Activated naive CD4-positive, alpha-beta T cell treated with anti-CD3 and anti-CD28 coated beads for 36 hours (primary cell): ENCODE measurements at regions of chr12 and their contacts with region 1.

Region 1: DNA sequence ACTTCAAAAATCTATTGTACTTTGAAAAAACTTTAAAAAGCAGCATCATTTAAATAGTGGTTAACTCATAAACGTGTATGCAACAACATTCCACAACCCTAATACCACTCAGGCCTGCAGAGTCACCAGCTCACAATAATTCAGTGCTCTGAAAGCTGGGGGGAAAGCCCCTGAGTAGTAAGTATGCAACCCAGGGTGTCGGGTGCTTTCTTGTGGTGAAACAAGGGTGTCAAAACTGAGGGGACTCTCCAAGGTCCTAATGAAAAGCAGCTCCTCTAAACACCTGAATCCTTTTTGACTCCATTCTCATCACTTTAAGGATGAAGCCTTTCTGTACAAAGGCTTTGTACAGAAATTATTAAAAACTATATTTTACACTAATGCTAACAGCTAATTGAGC is 33.7 kb downstream of the FGFR1OP2 start:
- DNase-seq: peak; percentile 92
- H3K4me3 Mint-ChIP-seq: no peak overlapping the region
- H3K27ac Mint-ChIP-seq: no peak overlapping the region
- H3K4me1 Mint-ChIP-seq: peaks cover 9% of the 10 kb centered on the region
- H3K27me3 Mint-ChIP-seq: no peaks in the 10 kb centered on the region

Region 2: GRCh38 chr12:26870491-26871419 is 101.2 kb before region 1 on chr12:
- CTCF ChIA-PET with region 1: no interaction called
- intact Hi-C with region 1: loop called (anchors 1 kb)
- DNase-seq: no peak
- H3K4me3 Mint-ChIP-seq: no peak overlapping the region
- H3K27ac Mint-ChIP-seq: no peak overlapping the region
- H3K4me1 Mint-ChIP-seq: peaks cover 13% of the 10 kb centered on the region
- H3K27me3 Mint-ChIP-seq: peaks cover 16% of the 10 kb centered on the region

Region 3: DNA sequence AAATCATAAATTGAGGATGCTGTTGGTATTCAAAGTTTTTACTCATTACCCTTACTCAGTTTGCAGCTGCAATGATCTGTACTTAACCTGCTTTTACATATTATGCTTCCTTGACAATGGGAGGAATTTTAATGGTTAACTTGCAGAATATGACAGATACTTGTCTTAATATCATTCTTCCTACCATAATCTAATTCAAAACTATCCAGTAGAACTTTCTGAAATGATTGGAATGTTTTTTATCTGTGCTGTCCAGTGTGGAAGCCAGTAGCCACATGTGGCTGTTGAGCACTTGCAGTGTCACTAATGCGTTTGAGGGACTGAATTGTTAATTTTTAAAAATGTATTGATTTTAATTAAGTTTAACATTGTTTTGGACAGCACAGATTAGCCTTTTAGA is 10.2 kb before region 1 on chr12:
- CTCF ChIA-PET with region 1: no interaction called
- intact Hi-C with region 1: no loop called
- DNase-seq: no peak
- H3K4me3 Mint-ChIP-seq: no peak overlapping the region
- H3K27ac Mint-ChIP-seq: no peak overlapping the region
- H3K4me1 Mint-ChIP-seq: no peaks in the 10 kb centered on the region
- H3K27me3 Mint-ChIP-seq: no peaks in the 10 kb centered on the region

Region 4: DNA sequence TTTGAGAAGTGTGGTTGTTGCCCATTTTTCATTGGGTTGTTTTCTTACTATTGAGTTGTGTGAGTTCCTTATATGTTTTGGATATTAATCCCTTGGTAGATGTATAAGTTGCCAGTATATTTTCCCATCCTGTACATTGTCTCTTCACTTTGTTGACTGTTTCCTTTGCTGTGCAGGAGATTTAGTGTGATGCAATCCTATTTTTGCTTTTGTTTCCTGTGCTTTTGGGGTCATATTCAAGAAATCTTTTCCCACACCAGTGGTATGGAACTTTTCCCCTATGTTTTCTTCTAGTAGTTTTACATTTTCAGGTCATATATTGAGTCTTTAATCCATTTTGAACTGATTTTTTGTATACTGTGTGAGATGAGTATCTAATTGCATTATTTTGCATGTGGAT is 907.7 kb after region 1 on chr12:
- CTCF ChIA-PET with region 1: no interaction called
- intact Hi-C with region 1: no loop called
- DNase-seq: no peak
- H3K4me3 Mint-ChIP-seq: no peak overlapping the region
- H3K27ac Mint-ChIP-seq: no peak overlapping the region
- H3K4me1 Mint-ChIP-seq: peaks cover 3% of the 10 kb centered on the region
- H3K27me3 Mint-ChIP-seq: no peaks in the 10 kb centered on the region